ENCODE measurements at regions of chr13 and their contacts with region 1.

Region 1: GRCh38 chr13:75694722-75695121 is 58.6 kb downstream of the LMO7 start:
- DNase-seq: no peak
- ATAC-seq: no peak
- H3K4me3 Mint-ChIP-seq: no peak overlapping the region
- H3K27ac Mint-ChIP-seq: no peak overlapping the region
- H3K4me1 Mint-ChIP-seq: peaks cover 2% of the 10 kb centered on the region
- H3K27me3 Mint-ChIP-seq: no peaks in the 10 kb centered on the region

Region 2: DNA sequence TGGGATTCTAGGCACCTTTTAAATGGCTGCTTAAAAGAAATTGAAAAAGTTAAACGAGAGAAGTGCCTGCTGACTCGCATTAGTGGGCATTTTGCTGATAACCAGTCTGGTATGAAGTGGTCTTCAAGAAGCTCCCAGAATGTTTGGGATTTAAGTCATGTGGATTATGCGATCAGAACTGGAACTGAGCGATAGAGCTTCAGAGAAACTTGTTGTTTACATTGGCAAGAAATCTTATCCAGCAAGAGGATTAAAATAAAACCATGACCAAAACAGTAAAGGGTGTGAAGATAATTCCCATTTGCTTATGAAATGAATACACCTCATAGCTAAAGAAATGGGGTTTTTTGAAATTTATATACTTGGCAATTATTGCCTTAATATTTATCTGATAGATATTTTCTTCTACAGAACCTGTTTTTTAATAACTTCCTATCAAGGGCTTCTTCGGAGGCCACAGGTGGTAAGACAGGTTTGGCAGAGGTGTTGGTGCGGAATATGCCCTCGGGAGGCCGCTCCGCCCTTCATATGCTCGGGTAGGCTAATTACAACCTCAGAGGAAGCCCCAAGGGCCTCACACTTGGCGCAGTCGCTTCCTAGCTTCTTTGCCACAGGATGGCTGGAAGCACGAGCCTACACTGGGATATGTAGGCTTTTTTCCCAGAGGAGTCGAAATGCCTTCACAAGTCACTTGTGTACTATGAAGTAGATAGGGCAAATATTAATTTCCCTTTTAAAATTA is 10.0 kb after region 1 on chr13:
- CTCF ChIA-PET with region 1: interaction called, 45 read pairs
- POLR2A ChIA-PET with region 1: no interaction called
- DNase-seq: no peak
- ATAC-seq: no peak
- H3K4me3 Mint-ChIP-seq: no peak overlapping the region
- H3K27ac Mint-ChIP-seq: no peak overlapping the region
- H3K4me1 Mint-ChIP-seq: peaks cover 9% of the 10 kb centered on the region
- H3K27me3 Mint-ChIP-seq: no peaks in the 10 kb centered on the region

Region 3: GRCh38 chr13:75760131-75761021 is 65.7 kb after region 1 on chr13:
- CTCF ChIA-PET with region 1: interaction called, 50 read pairs
- POLR2A ChIA-PET with region 1: interaction called, 3 read pairs
- DNase-seq: peak; percentile 34
- ATAC-seq: peak; percentile 67
- H3K4me3 Mint-ChIP-seq: peak overlapping the region; percentile 56
- H3K27ac Mint-ChIP-seq: peak overlapping the region; percentile 77
- H3K4me1 Mint-ChIP-seq: peaks cover 61% of the 10 kb centered on the region
- H3K27me3 Mint-ChIP-seq: no peaks in the 10 kb centered on the region

Region 4: DNA sequence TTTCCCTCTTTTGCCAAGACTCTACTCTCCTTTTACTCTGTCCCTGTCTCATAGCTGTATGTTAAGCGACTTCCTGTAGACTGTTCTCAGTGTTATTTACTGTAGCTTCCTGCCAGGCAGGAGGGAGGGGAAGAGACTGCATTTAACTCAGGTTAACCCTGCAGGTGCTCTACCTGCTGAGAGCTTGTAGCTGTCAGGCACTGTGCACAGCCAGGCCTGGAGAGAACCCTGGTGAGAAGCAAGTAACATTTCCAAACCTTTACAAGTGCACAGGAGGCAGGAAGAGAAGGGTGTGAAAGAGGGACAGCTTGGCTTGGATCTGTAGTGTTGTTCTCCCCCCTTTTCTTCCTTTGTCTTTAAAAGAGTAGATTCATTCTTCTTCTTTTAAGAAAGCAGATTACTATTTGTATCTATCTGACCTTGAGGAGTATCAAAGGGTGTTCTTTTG is 108.5 kb after region 1 on chr13:
- CTCF ChIA-PET with region 1: interaction called, 14 read pairs
- POLR2A ChIA-PET with region 1: no interaction called
- DNase-seq: peak; percentile 31
- ATAC-seq: peak; percentile 93
- H3K4me3 Mint-ChIP-seq: no peak overlapping the region
- H3K27ac Mint-ChIP-seq: peak overlapping the region; percentile 79
- H3K4me1 Mint-ChIP-seq: peaks cover 31% of the 10 kb centered on the region
- H3K27me3 Mint-ChIP-seq: no peaks in the 10 kb centered on the region

Region 5: DNA sequence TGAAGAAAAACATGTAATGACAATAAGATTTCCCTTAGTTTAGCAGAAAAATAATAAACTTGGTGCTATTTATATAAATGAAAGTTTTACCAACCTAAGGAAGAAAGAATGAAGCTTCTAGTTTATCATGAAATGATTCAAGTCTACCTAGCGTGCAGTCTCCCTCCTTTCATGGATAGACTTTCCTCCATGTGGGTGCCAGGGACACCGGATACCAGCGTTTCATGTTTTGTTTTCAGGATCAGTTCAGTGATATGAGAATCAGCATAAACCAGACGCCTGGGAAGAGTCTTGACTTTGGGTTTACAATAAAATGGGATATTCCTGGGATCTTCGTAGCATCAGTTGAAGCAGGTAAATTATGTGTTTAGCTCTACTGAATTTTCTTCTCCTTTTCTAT is 138.1 kb after region 1 on chr13:
- CTCF ChIA-PET with region 1: interaction called, 12 read pairs
- POLR2A ChIA-PET with region 1: no interaction called
- DNase-seq: no peak
- ATAC-seq: no peak
- H3K4me3 Mint-ChIP-seq: no peak overlapping the region
- H3K27ac Mint-ChIP-seq: no peak overlapping the region
- H3K4me1 Mint-ChIP-seq: no peaks in the 10 kb centered on the region
- H3K27me3 Mint-ChIP-seq: no peaks in the 10 kb centered on the region